Endothelial cell of umbilical vein (primary cell): ENCODE measurements at regions of chr18 and their contacts with region 1.

Region 1: DNA sequence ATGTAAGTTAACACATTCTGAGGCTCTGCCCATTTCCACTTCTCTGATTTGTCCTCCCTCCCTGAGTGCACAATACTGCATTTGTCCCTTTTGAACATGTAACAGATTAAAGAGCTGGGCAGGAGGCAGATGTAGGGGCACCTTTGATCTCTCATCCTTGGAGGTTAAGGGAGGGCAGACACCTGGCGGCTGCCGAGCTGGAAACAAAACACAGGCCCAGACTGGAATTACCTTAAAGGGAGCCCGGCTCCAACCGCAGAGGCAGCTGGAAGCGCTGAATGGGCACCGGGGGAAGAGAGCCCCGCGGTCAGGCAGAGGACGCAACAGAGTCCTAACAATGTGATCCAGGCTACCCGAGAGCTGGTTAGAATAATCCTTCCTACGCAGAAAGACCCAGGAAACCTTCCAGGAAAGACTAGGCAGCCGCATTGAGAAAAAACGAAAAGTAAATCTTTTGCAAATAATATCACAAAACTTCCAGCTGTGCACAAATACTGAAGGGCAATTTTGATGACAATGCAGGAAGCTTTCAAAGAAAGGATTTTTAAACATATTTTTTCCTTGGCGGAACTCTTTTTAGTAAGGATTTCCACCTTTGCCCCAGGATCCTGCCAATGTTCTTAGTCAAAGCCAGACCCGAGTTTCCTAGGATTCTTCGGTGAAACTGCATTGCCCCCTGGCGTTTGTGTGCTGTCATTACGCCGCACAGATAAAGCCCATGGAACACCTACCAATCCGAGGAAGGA is 216.0 kb downstream of the TGIF1 start:
- DNase-seq: peak; percentile 90
- H3K4me3 ChIP-seq: peak overlapping the region in 1 of 3 experiments; percentile 34
- H3K27ac ChIP-seq: peak overlapping the region; percentile 90
- H3K4me1 ChIP-seq: peaks cover 16% of the 10 kb centered on the region
- H3K27me3 ChIP-seq: no peaks in the 10 kb centered on the region
- CTCF ChIP-seq: peak; percentile 86 to 91
- POLR2A ChIP-seq: no peak

Region 2: DNA sequence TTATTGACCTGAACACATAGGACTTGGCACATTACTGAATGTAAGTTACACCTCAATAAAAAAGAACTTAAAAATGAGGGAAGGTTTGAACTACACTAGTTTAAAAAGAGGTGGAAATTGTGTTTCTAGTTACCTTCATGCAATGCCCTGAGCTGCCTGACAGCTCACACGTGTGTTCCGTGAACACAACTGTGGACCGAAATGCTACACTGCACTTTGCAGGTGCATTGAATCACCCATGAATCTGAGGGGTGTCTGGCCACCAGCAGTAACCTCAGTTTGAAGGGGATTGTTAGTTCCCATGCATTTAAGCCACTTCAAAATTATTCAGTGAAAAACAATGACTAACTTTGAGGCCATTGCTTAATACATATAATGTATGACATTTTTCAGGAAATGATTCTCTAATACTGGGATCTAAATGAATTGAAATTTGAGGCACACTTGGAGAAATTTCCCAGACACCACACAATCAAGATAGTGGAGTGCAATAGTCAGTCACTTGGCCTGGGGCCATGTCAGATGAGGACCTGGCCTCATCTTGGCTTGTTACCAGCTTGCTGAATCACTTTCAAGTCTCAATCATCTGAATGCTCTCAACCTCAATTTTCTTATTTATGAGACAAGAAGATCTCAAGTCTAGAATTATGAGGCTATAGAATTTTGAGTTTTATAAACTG is 344.7 kb before region 1 on chr18:
- CTCF ChIA-PET with region 1: interaction called, 4 read pairs
- POLR2A ChIA-PET with region 1: no interaction called
- dilution Hi-C with region 1: no loop called
- intact Hi-C with region 1: loop called (anchors 1 kb)
- DNase-seq: peak; percentile 94
- H3K4me3 ChIP-seq: no peak overlapping the region
- H3K27ac ChIP-seq: peak overlapping the region; percentile 49
- H3K4me1 ChIP-seq: peaks cover 33% of the 10 kb centered on the region
- H3K27me3 ChIP-seq: no peaks in the 10 kb centered on the region
- CTCF ChIP-seq: no peak
- POLR2A ChIP-seq: no peak

Region 3: DNA sequence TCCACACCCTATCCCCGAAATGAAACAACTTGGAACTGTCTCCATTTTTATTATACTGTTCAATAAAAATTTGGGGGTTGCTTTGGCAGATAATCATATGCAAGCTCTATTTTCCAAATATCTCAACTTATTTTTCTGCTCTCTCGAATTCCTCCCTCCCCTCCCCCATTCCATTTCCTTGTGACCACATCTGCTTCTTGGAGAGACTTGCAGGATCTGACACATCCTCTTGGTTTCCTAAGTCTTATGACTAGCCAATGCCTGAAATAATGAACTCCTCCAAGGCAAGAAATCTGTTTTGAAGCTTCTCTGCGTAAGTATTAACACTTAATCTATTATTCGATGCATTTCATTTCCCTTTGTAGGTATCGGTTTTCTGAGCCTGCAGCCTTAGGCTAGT is 199.9 kb before region 1 on chr18:
- CTCF ChIA-PET with region 1: interaction called, 16 read pairs
- POLR2A ChIA-PET with region 1: no interaction called
- dilution Hi-C with region 1: no loop called
- intact Hi-C with region 1: no loop called
- DNase-seq: peak; percentile 92
- H3K4me3 ChIP-seq: peak overlapping the region in 1 of 3 experiments; percentile 47
- H3K27ac ChIP-seq: peak overlapping the region; percentile 92
- H3K4me1 ChIP-seq: peaks cover 36% of the 10 kb centered on the region
- H3K27me3 ChIP-seq: no peaks in the 10 kb centered on the region
- CTCF ChIP-seq: no peak
- POLR2A ChIP-seq: no peak

Region 4: GRCh38 chr18:3623769-3624545 is 42.0 kb before region 1 on chr18:
- CTCF ChIA-PET with region 1: interaction called, 26 read pairs
- POLR2A ChIA-PET with region 1: interaction called, 4 read pairs
- dilution Hi-C with region 1: no loop called
- intact Hi-C with region 1: loop called (anchors 1 kb)
- DNase-seq: peak; percentile 84
- H3K4me3 ChIP-seq: peak overlapping the region in 1 of 3 experiments; percentile 21
- H3K27ac ChIP-seq: peak overlapping the region; percentile 89
- H3K4me1 ChIP-seq: peaks cover 31% of the 10 kb centered on the region
- H3K27me3 ChIP-seq: no peaks in the 10 kb centered on the region
- CTCF ChIP-seq: no peak
- POLR2A ChIP-seq: peak; percentile 50

Region 5: GRCh38 chr18:3771121-3771971 is 105.4 kb after region 1 on chr18:
- CTCF ChIA-PET with region 1: interaction called, 20 read pairs
- POLR2A ChIA-PET with region 1: no interaction called
- dilution Hi-C with region 1: no loop called
- intact Hi-C with region 1: no loop called
- DNase-seq: peak; percentile 93
- H3K4me3 ChIP-seq: peak overlapping the region in 2 of 3 experiments; percentile 35 to 53
- H3K27ac ChIP-seq: peak overlapping the region; percentile 37
- H3K4me1 ChIP-seq: peaks cover 40% of the 10 kb centered on the region
- H3K27me3 ChIP-seq: no peaks in the 10 kb centered on the region
- CTCF ChIP-seq: peak; percentile 93 to 94
- POLR2A ChIP-seq: no peak

Region 6: DNA sequence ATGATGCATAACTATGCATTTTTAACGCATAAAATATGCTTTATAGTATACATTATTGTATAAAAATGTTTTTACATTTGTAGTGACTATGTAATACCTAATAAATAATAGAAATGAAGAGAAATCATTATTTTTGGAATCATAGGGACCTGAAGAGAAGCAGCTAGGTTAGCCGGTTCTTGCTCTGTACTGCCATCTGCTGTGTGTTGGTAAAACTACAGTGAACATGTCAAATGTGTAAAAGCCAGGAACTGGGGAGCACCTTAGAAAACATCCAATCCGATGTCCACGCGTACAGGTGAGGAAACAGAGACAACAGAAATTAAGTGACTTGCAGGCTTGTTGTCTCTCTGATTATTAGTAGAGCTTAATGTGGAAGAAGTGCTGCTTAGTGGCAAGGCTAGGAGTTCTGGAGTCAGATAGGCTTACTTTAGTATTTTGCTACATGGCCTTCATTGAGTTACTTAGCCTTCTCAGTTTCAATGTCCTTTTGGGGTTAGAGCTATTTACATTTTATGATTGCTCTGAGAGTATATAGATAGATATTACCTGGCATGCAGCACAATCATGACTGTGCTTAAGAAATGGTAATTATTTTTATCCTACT is 402.7 kb after region 1 on chr18:
- CTCF ChIA-PET with region 1: interaction called, 11 read pairs
- POLR2A ChIA-PET with region 1: no interaction called
- dilution Hi-C with region 1: no loop called
- intact Hi-C with region 1: no loop called
- DNase-seq: peak; percentile 58
- H3K4me3 ChIP-seq: no peak overlapping the region
- H3K27ac ChIP-seq: no peak overlapping the region
- H3K4me1 ChIP-seq: no peaks in the 10 kb centered on the region
- H3K27me3 ChIP-seq: no peaks in the 10 kb centered on the region
- CTCF ChIP-seq: peak; percentile 52 to 66
- POLR2A ChIP-seq: no peak